ENCODE measurements at regions of chr2 and their contacts with region 1.

Region 1: GRCh38 chr2:97751752-97752151 is 38.4 kb downstream of the ZAP70 start:
- DNase-seq: no peak
- ATAC-seq: no peak
- H3K4me3 Mint-ChIP-seq: no peak overlapping the region
- H3K27ac Mint-ChIP-seq: no peak overlapping the region
- H3K4me1 Mint-ChIP-seq: peaks cover 19% of the 10 kb centered on the region
- H3K27me3 Mint-ChIP-seq: no peaks in the 10 kb centered on the region
- CTCF ChIP-seq: no peak

Region 2: DNA sequence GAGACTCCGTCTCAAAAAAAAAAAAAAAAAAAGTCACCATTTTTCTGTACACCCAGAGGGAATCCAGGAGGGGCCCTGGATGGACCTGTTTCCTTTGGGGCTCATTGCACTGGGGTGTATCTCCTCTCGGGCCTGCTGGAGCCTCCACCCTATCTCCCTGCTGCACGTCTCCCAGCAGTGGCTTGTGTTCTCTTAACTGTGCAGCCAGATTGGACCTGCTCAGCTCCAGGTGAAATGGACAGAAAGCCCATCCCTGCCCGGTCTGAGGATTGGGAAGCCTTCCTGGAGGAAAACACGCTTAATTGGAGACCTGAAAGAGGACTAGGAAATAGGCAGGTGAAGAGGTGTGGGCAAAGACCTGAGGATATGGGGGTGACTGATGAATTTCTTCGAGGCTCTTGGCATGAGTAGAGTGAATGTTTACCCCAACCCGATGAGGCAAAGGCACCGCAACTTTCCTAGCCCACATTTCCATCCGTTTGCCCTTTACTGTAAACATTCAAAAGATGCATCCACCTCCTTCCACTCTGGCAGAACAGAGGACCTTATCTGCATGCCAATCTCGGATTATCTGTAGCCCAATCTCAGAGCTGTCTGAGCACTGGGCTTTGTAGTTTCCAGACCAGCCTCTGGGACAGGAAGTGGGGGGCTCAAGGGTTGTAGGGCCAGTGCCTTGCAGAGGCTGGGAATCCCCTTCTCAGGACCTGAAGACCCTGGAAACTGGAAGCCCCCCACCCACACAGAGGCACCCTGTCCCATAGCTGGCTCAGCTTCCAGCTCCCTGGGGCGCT is 41.0 kb before region 1 on chr2:
- CTCF ChIA-PET with region 1: interaction called, 33 read pairs
- POLR2A ChIA-PET with region 1: interaction called, 6 read pairs
- intact Hi-C with region 1: loop called (anchors 5 kb)
- DNase-seq: peak; percentile 65
- ATAC-seq: no peak
- H3K4me3 Mint-ChIP-seq: no peak overlapping the region
- H3K27ac Mint-ChIP-seq: peak overlapping the region; percentile 79
- H3K4me1 Mint-ChIP-seq: peaks cover 38% of the 10 kb centered on the region
- H3K27me3 Mint-ChIP-seq: no peaks in the 10 kb centered on the region
- CTCF ChIP-seq: no peak

Region 3: DNA sequence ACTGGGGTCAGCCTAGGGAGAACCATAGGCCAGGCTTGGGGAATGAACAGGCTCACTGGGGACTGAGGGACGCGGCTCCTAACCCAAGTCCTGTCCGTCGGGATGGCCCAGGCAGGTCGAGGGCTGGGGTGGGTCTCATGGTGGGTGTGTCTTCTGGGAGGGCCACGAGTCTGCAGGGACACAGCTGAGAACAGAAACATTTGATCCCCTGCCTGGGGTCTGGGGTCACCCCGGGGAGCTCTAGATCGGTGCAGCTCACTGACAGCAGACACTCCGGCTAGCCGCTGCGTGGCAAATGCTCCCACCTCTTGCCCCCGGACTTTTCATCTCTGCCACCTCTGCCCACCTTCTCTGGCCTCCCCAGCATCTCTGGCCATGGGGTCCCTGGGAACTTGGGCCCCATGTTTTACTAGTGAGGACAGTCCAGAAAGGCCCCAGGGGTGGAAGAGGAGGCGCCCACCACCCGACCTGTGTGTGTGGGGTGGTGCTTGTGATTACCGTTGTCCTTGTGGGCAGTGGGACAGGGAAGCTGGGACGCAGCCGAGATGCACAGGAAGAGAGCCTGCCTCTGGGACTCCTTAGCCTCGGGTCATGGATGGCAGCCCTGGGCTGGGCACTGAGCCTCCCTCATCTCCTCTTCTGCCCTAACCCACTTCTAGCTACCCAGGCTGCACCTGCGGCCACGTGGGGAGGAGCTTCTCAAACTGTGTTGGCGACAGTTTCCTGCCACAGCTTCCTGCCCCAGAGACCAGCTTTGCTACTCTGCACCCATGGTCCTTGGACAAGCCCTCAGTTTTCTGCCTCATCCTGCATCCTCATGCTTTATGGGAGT is 33.5 kb before region 1 on chr2:
- CTCF ChIA-PET with region 1: interaction called, 167 read pairs
- POLR2A ChIA-PET with region 1: interaction called, 15 read pairs
- intact Hi-C with region 1: loop called (anchors 5 kb)
- DNase-seq: peak; percentile 91
- ATAC-seq: peak; percentile 67
- H3K4me3 Mint-ChIP-seq: peak overlapping the region; percentile 89
- H3K27ac Mint-ChIP-seq: peak overlapping the region; percentile 100
- H3K4me1 Mint-ChIP-seq: peaks cover 58% of the 10 kb centered on the region
- H3K27me3 Mint-ChIP-seq: no peaks in the 10 kb centered on the region
- CTCF ChIP-seq: no peak

Region 4: GRCh38 chr2:97740590-97741182 is 11.1 kb before region 1 on chr2:
- CTCF ChIA-PET with region 1: interaction called, 22 read pairs
- POLR2A ChIA-PET with region 1: interaction called, 3 read pairs
- intact Hi-C with region 1: no loop called
- DNase-seq: peak; percentile 66
- ATAC-seq: peak; percentile 37
- H3K4me3 Mint-ChIP-seq: no peak overlapping the region
- H3K27ac Mint-ChIP-seq: peak overlapping the region; percentile 59
- H3K4me1 Mint-ChIP-seq: peaks cover 52% of the 10 kb centered on the region
- H3K27me3 Mint-ChIP-seq: no peaks in the 10 kb centered on the region
- CTCF ChIP-seq: peak; percentile 85

Region 5: GRCh38 chr2:97766567-97766966 is 14.8 kb after region 1 on chr2:
- CTCF ChIA-PET with region 1: interaction called, 10 read pairs
- POLR2A ChIA-PET with region 1: no interaction called
- intact Hi-C with region 1: no loop called
- DNase-seq: no peak
- ATAC-seq: no peak
- H3K4me3 Mint-ChIP-seq: no peak overlapping the region
- H3K27ac Mint-ChIP-seq: no peak overlapping the region
- H3K4me1 Mint-ChIP-seq: peaks cover 20% of the 10 kb centered on the region
- H3K27me3 Mint-ChIP-seq: no peaks in the 10 kb centered on the region
- CTCF ChIP-seq: no peak

Region 6: GRCh38 chr2:97788986-97789644 is 37.4 kb after region 1 on chr2:
- CTCF ChIA-PET with region 1: no interaction called
- POLR2A ChIA-PET with region 1: no interaction called
- intact Hi-C with region 1: no loop called
- DNase-seq: no peak
- ATAC-seq: no peak
- H3K4me3 Mint-ChIP-seq: no peak overlapping the region
- H3K27ac Mint-ChIP-seq: no peak overlapping the region
- H3K4me1 Mint-ChIP-seq: no peaks in the 10 kb centered on the region
- H3K27me3 Mint-ChIP-seq: no peaks in the 10 kb centered on the region
- CTCF ChIP-seq: no peak

Region 7: GRCh38 chr2:97844311-97844859 is 92.6 kb after region 1 on chr2:
- CTCF ChIA-PET with region 1: no interaction called
- POLR2A ChIA-PET with region 1: no interaction called
- intact Hi-C with region 1: no loop called
- DNase-seq: no peak
- ATAC-seq: no peak
- H3K4me3 Mint-ChIP-seq: no peak overlapping the region
- H3K27ac Mint-ChIP-seq: no peak overlapping the region
- H3K4me1 Mint-ChIP-seq: peaks cover 18% of the 10 kb centered on the region
- H3K27me3 Mint-ChIP-seq: no peaks in the 10 kb centered on the region
- CTCF ChIP-seq: no peak